ENCODE measurements at regions of chr9 and their contacts with region 1.

Region 1: GRCh38 chr9:29514336-29514735 is 1941.1 kb upstream of the C9orf72 start:
- DNase-seq: no peak
- H3K4me3 Mint-ChIP-seq: no peak overlapping the region
- H3K27ac Mint-ChIP-seq: no peak overlapping the region
- H3K4me1 Mint-ChIP-seq: no peaks in the 10 kb centered on the region
- H3K27me3 Mint-ChIP-seq: no peaks in the 10 kb centered on the region

Region 2: DNA sequence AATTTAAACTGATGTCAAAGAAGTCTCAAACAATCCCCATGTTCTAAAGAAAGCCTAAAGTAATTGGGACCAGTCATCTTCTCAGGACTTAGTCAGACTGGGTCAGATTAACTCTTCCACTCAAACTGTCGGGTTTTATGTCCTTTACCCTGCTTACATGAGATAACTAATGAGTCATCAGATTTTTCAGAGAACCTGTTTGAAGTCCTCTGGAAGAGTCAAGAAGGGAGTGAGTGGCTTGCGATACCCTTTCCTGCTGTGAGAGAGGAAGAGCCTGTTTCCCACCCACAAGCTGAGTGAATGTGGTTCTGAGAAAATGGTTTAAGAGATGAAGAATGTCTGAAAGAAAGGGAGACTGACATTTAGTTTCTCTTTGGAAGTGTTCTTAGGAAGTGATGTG is 74.4 kb before region 1 on chr9:
- CTCF ChIA-PET with region 1: no interaction called
- POLR2A ChIA-PET with region 1: no interaction called
- intact Hi-C with region 1: loop called (anchors 10 kb)
- DNase-seq: no peak
- H3K4me3 Mint-ChIP-seq: no peak overlapping the region
- H3K27ac Mint-ChIP-seq: no peak overlapping the region
- H3K4me1 Mint-ChIP-seq: no peaks in the 10 kb centered on the region
- H3K27me3 Mint-ChIP-seq: no peaks in the 10 kb centered on the region

Region 3: DNA sequence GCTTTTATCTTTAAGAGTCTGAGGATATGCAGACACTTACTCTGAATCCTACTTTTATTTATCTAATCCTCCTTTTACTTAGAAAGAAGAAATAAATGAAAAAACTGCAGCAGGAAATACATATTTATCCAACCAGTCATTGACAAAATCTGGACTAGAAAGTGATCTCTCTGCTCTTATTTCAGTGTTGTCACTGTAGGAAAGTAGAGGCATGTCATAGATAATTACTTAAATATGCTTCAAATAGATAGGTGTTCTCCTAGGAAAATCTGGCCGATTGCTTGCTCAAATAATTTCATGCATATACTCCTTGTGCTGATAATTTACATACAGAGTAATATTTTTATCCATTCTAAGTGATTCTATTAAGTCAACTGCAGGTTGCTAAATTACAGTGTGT is 60.9 kb after region 1 on chr9:
- CTCF ChIA-PET with region 1: no interaction called
- POLR2A ChIA-PET with region 1: no interaction called
- intact Hi-C with region 1: loop called (anchors 10 kb)
- DNase-seq: no peak
- H3K4me3 Mint-ChIP-seq: no peak overlapping the region
- H3K27ac Mint-ChIP-seq: no peak overlapping the region
- H3K4me1 Mint-ChIP-seq: no peaks in the 10 kb centered on the region
- H3K27me3 Mint-ChIP-seq: no peaks in the 10 kb centered on the region

Region 4: GRCh38 chr9:29830821-29831220 is 316.5 kb after region 1 on chr9:
- CTCF ChIA-PET with region 1: no interaction called
- POLR2A ChIA-PET with region 1: no interaction called
- intact Hi-C with region 1: no loop called
- DNase-seq: no peak
- H3K4me3 Mint-ChIP-seq: no peak overlapping the region
- H3K27ac Mint-ChIP-seq: no peak overlapping the region
- H3K4me1 Mint-ChIP-seq: no peaks in the 10 kb centered on the region
- H3K27me3 Mint-ChIP-seq: no peaks in the 10 kb centered on the region

Measured in activated CD4-positive, alpha-beta memory T cell treated with anti-CD3 and anti-CD28 coated beads for 36 hours (primary cell).